ENCODE measurements at regions of chr3 and their contacts with region 1.

Region 1: GRCh38 chr3:42213417-42213816 is 52.6 kb downstream of the CCK start:
- DNase-seq: no peak
- ATAC-seq: peak in 1 of 8 donors; percentile 48
- H3K4me3 ChIP-seq: no peak overlapping the region
- H3K27ac ChIP-seq: no peak overlapping the region
- H3K4me1 ChIP-seq: peaks cover 0 to 12% (median 0%) of the 10 kb centered on the region in 9 donors
- H3K27me3 ChIP-seq: no peaks in the 10 kb centered on the region
- CTCF ChIP-seq: no peak

Region 2: GRCh38 chr3:42262525-42262924 is 49.1 kb after region 1 on chr3:
- intact Hi-C with region 1: loop called in 1 of 10 experiments (anchors 1 kb)
- DNase-seq: no peak
- ATAC-seq: peak in 1 of 8 donors; percentile 33
- H3K4me3 ChIP-seq: no peak overlapping the region
- H3K27ac ChIP-seq: no peak overlapping the region
- H3K4me1 ChIP-seq: peaks cover 0 to 34% (median 17%) of the 10 kb centered on the region in 9 donors
- H3K27me3 ChIP-seq: peaks cover 17 to 95% (median 85%) of the 10 kb centered on the region in 7 donors
- CTCF ChIP-seq: no peak